ENCODE measurements at regions of chr7 and their contacts with region 1.

Region 1: DNA sequence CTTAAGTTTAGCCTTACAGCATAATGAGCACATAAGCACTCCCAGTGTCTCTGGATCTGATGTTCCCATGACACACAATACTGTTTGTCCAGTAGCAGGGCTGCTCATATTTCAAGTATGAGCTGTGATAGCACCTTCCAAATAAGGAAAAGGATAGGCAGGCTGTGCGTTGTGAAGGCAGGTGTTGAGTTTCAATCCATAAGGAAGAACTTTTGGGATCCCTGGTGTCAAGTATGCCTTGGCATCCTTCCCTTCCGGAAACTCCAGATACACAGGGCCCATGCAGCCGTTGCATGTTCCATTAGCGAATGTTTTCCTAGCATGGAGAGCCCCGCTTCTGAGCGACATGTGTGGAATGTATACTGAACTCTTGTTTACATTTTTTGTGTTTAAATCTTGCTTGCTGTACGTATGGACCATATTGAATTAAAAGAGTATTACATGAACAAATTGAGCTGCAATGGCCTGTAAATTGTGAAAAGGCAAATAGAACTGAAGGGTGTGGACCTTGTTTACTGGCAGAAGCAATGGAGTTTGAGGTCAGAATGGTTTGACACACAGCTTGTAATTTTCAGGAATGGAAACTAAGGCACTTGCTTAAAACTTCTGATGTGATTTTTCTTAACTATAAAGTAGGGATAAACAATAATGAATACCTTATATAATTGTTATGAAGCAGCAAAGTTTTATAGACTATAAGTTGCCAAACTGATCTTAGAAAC is 33.8 kb upstream of the COBL start:
- DNase-seq: peak; percentile 95
- H3K4me3 Mint-ChIP-seq: no peak overlapping the region
- H3K27ac Mint-ChIP-seq: peak overlapping the region; percentile 85
- H3K4me1 Mint-ChIP-seq: peaks cover 9% of the 10 kb centered on the region
- H3K27me3 Mint-ChIP-seq: no peaks in the 10 kb centered on the region
- CTCF ChIP-seq: no peak

Region 2: DNA sequence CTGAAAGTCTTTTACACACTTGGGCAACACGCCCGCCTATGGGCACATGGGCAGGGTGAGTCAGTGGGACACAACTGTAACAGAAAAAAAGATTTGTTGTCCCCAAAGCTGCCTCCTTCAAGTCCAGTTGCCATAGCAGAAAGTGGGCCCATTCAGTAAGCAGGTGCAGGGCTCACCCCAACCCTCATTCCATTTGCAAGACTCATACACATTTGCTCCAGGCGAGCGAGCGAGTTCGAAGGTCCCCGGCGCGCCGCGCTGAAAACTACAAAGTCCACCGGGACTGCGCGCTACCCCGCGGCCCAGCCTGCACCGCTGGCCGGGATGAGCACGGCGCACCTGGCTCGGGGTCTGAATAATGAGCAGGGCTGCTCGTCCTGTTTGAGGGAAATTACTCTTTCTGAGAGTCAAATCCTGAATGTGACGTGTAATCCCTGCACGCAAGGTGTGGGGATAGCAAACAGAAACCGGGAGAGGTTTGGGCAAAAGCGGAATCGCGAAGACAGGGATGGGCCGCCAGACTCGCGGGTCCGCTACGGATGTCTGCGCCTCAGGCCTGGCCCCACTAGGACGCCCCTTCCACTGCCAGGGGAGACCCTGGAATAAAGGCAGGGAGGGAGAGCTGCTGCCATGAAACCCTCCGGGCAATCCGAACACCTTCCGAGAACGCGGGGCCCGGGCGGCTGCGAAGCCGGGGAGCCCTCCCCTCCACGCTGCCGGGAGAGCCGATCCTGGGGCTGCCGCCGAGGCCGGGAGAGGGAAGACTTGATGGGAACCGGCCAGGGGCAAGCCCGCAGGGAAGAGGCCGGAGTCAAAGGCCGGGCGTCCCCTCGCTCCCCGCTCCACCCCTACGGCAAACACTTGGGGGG is 34.7 kb before region 1 on chr7:
- CTCF ChIA-PET with region 1: interaction called, 4 read pairs
- POLR2A ChIA-PET with region 1: interaction called, 3 read pairs
- intact Hi-C with region 1: loop called (anchors 5 kb)
- DNase-seq: peak; percentile 67
- H3K4me3 Mint-ChIP-seq: peak overlapping the region; percentile 85
- H3K27ac Mint-ChIP-seq: peak overlapping the region; percentile 92
- H3K4me1 Mint-ChIP-seq: peaks cover 11% of the 10 kb centered on the region
- H3K27me3 Mint-ChIP-seq: no peaks in the 10 kb centered on the region
- CTCF ChIP-seq: no peak

Region 3: DNA sequence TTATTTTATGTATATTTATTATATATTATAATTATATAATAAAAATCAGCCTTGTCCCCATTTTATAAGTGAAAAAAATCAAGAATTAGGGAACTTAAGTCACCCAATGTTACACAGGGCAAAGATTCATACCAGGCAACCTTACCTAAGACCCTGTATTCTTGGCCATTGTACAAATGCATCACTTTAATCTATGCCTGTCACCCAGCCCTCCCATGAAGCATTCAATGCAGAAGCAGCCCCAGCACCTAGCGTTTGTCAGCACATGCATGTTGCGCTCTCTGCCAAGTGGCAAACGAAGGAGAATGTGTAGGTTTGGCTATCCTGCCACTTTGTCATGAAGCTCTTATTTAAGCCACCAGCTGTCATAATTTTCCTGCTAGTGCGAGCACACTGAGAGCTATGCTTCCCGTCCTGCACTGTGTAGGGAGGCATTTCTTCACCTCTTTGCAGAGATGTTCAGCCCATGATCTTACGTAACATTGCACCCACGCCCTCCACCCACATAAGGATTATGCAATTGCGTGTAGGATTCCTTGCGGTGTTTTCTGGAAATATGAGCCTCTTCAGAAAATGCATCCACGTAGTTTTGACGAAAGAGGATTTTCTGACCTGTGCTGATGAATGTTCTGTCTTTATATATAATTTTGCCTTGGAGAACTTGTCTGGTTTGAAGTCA is 26.0 kb before region 1 on chr7:
- CTCF ChIA-PET with region 1: interaction called, 5 read pairs
- POLR2A ChIA-PET with region 1: interaction called, 17 read pairs
- intact Hi-C with region 1: loop called (anchors 5 kb)
- DNase-seq: peak; percentile 96
- H3K4me3 Mint-ChIP-seq: no peak overlapping the region
- H3K27ac Mint-ChIP-seq: peak overlapping the region; percentile 94
- H3K4me1 Mint-ChIP-seq: peaks cover 21% of the 10 kb centered on the region
- H3K27me3 Mint-ChIP-seq: no peaks in the 10 kb centered on the region
- CTCF ChIP-seq: no peak

Measured in MCF 10A (cell line).